GM13976 (cell line): ENCODE measurements at regions of chr11 and their contacts with region 1.

Region 1: GRCh38 chr11:59668950-59669610 is at the start of gene PATL1:
- DNase-seq: peak; percentile 99
- CTCF ChIP-seq: no peak

Region 2: DNA sequence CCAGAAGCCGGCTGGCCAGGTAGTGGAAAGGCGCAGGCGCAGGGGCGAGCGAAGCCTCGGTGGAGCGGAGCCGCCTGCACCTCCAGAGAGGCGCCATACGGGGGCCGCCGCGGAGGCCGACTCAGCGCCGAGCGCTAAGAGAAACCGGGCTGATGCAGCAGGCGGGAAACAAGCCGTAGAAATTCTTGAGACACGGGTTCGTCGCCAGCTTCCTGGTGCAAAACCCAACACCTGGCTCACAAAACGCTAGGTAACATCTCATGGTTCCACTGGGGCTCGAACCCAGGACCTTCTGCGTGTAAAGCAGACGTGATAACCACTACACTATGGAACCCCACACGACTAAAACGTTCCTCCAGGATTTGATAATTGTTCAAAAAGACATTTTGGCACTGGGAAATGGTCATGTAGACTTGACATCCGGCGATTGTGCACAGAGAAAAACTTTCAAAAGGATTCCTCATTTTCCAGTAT is 118.7 kb before region 1 on chr11:
- in situ Hi-C with region 1: loop called (anchors 10 kb)
- DNase-seq: peak; percentile 84
- CTCF ChIP-seq: peak; percentile 36